Posterior vena cava (tissue), 2 donors: ENCODE measurements at regions of chr22 and their contacts with region 1.

Region 1: DNA sequence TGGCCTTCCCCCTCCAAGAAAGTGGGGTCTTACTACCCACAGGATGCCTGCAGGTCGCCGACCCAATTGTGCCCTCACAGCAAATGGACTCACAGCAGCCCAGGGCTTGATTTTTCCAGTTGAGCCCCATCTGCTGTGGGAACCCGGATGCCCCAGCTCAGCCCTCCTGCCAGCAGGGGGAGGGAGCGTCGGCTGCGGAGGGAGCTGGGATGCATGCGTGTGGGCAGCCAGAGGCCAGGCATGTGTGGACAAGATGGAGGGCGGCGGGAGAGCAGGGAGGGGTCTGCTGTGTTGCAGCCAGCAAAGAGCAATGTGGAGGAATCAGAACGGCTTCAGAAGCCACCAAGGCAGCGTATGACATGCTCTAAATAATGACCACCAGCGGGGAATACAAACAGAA is 41.0 kb upstream of the EIF3D start:
- DNase-seq: no peak

Region 2: DNA sequence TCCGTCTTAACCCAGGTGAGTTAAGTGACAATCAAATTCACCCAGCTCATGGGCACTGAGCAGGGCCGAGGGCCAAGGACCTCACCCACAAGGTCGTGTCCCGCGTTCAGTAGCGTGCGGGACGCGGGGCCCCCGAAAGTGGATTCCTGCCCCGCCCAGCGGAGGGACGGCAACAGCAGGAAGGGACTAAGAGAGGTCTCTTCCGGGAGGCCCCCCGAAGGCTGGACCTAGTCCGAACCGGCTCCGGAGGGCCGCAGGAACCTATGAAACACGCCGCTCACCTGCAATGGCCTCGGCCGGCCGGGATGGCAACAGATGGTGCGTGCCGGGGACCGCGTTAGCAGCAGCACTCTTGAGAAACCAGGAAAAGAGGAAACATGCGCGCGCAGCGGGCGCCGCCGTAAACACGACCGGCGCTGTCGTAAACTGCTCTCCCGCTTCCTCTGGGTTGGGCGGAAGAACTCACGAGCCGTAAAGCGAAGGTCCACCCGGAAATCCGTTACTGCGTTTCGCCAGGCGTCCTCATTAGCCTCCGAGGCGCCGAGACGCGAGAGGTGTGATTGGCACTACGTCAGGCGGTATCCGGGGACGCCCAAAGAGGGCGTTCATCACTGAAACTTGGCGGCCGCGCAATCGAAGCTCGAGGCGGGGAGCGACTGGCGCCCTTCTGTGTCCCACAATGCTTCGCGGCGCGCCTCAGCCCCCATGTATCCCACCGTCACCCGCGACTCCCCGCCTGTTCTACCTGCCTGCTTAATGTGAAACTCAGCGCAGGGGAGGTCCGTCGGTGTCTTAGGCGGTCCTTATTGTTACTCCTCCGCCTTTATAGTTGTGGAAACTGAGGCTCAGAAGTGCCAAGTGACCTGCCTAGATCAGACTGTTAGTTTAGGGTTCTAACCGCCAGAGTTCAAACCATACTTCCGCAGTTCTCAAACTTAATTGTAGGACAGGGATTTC is 40.9 kb before region 1 on chr22 and contains the start of gene EIF3D:
- intact Hi-C with region 1: no loop called
- DNase-seq: peak; percentile 100
- total RNA-seq, gene EIF3D: 98.6 to 106 TPM

Region 3: GRCh38 chr22:36757668-36758211 is 187.7 kb after region 1 on chr22:
- intact Hi-C with region 1: loop called in 1 of 2 experiments (anchors 10 kb)
- DNase-seq: peak; percentile 92

Region 4: DNA sequence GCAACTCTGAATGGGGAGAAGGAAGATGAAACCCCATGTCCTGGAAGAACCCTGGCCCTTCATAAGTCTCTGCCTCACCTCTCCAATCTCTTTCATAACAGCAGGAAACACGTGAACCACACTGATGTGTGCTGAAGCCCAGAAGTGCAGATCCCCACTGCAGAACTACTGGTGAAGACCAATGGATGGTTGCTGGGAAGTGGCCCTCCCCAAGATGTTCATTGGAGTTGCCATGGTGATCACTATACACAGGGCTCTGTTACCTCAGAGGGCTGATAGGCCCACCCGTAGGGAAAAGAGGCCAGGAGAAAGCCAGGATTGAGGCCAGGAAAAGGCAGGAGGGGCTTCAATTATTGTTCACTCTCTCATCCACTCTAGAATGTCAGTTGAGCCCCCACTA is 437.7 kb after region 1 on chr22:
- intact Hi-C with region 1: loop called in 1 of 2 experiments (anchors 10 kb)
- DNase-seq: no peak